ENCODE measurements at regions of chr2 and their contacts with region 1.

Region 1: GRCh38 chr2:57376985-57377384 is 669.6 kb upstream of the VRK2 start:
- DNase-seq: no peak
- ATAC-seq: no peak
- H3K4me3 ChIP-seq: no peak overlapping the region
- H3K27ac ChIP-seq: no peak overlapping the region
- H3K4me1 ChIP-seq: no peaks in the 10 kb centered on the region
- H3K27me3 ChIP-seq: no peaks in the 10 kb centered on the region
- CTCF ChIP-seq: peak; percentile 11

Region 2: DNA sequence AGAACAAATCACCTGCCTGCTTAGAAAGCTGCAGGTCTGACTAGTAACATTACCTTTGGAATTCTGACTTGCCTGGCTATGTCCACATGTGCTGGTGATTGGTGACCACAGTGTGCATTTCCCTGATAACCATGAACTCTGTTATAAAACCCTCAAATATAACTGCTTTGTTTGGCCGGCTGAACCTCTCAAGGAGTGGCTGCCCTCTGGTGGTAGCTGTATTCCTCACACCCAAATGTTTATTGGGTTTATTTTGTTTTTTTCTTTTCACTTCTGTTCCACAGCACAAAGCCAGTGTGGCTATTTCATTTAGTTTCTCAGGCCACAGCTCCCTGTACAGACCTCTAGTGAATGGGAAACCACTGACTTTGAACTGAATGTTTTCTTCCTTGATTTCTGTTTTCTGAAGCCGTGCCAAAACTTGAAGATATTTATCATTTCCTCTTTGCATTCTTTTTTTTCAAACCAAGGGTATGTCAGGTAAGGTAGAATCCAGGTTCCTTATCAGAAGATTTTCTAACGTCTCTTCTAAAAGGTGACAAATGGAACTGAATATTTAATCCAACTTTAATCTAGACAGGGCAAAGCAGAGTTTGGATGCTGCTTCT is 120.6 kb after region 1 on chr2:
- intact Hi-C with region 1: loop called in 1 of 2 experiments (anchors 5 kb)
- DNase-seq: no peak
- ATAC-seq: peak in 1 of 4 donors; percentile 58
- H3K4me3 ChIP-seq: no peak overlapping the region
- H3K27ac ChIP-seq: no peak overlapping the region
- H3K4me1 ChIP-seq: no peaks in the 10 kb centered on the region
- H3K27me3 ChIP-seq: no peaks in the 10 kb centered on the region
- CTCF ChIP-seq: peak; percentile 74

Region 3: DNA sequence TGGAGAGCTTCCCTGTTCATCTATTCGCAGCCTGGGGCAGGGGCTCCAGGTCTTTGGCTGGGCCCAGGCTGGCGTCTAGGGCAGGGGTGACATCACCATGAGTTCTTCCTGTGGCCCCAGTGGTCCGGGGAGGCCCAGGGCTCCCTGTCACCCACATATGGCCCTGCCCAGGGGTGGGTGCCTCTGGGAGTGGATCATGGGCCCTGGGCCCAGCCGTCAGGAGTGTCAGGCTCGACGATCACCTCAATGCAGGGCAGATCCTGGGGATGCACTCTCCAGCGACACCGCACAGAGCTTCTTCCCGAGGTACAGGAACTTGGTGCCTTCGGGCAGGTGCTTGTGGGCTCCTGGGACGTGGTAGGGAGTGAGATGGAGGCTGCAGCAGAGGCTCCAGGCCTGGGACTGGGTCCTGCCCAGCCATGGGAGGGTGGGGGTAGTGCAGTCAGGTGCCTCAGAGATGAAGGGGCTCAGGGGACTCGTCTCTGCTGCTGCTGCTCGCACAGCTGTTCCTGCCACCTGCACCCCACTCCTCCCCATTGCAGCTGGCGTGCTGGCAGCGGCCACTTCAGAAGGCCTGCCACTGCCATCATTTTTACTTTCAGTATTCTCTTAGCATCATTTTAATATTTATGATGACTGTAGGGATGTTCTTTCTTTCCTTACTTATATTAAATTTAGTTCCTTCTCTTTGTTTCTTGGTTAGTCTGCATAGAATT is 473.6 kb after region 1 on chr2:
- intact Hi-C with region 1: no loop called
- DNase-seq: peak in 1 of 2 donors; percentile 41
- ATAC-seq: no peak
- H3K4me3 ChIP-seq: no peak overlapping the region
- H3K27ac ChIP-seq: no peak overlapping the region
- H3K4me1 ChIP-seq: no peaks in the 10 kb centered on the region
- H3K27me3 ChIP-seq: no peaks in the 10 kb centered on the region
- CTCF ChIP-seq: no peak

Measured in psoas muscle (tissue), 8 donors.